ENCODE measurements at regions of chr3 and their contacts with region 1.

Region 1: DNA sequence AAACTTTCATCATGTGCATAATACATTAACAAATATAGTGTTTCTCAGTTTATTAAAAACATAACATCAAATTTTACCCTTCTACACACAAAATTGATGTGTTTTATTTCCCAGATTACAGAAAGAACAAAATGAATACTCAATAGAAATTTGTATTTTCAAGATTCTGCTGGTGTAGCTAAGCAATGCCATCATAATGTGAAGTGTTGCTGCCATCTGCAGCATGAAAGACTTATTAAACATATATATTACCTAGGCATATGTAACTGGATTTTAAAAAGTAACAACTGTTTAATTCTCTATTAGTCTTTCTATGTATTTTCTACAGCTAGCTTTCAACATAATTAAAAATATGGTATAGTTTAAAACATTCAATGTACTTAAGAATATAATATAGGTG is 27.5 kb downstream of the PLSCR5 start:
- DNase-seq: no peak
- ATAC-seq: peak; percentile 70
- H3K4me3 ChIP-seq: no peak overlapping the region
- H3K27ac ChIP-seq: no peak overlapping the region
- H3K4me1 ChIP-seq: no peaks in the 10 kb centered on the region
- H3K27me3 ChIP-seq: no peaks in the 10 kb centered on the region
- CTCF ChIP-seq: peak; percentile 9 to 59 (median 19); a peak in 3 of 6 replicates
- EP300 ChIP-seq: no peak
- POLR2A ChIP-seq: no peak
- RAD21 ChIP-seq: peak; percentile 78

Region 2: GRCh38 chr3:146218880-146219866 is 358.5 kb before region 1 on chr3:
- CTCF ChIA-PET with region 1: interaction called, 15 read pairs
- POLR2A ChIA-PET with region 1: no interaction called
- RAD21 ChIA-PET with region 1: interaction called, 5 read pairs
- SMC1A ChIA-PET with region 1: interaction called, 11 read pairs
- in situ Hi-C with region 1: loop called (anchors 5 kb)
- intact Hi-C with region 1: loop called (anchors 1 kb)
- DNase-seq: no peak
- ATAC-seq: peak; percentile 44; the same call in 1 of the 3 replicates
- H3K4me3 ChIP-seq: no peak overlapping the region
- H3K27ac ChIP-seq: no peak overlapping the region
- H3K4me1 ChIP-seq: no peaks in the 10 kb centered on the region
- H3K27me3 ChIP-seq: no peaks in the 10 kb centered on the region
- CTCF ChIP-seq: peak; percentile 47 to 51 (median 50); a peak in 5 of 6 replicates
- EP300 ChIP-seq: no peak
- POLR2A ChIP-seq: no peak
- RAD21 ChIP-seq: peak; percentile 53

Region 3: DNA sequence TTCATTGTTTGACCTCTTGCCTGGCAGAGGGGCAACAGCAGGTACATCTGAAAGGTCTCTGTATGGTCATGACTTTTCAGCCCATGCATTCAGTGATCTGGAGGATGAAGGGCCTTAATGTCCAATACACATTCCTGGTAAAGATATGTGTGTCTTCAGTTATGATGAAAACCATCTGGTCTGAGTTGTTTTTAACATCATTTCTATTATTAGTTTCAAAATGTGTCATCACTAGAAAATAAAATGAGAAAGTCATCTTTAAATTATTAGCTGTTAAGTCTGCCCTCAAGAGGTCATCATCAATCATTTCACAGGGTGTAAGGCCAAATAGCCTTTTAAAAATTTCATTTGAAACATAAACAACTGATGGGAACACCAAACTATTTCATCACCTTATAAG is 234.7 kb before region 1 on chr3:
- CTCF ChIA-PET with region 1: no interaction called
- POLR2A ChIA-PET with region 1: no interaction called
- RAD21 ChIA-PET with region 1: no interaction called
- SMC1A ChIA-PET with region 1: no interaction called
- in situ Hi-C with region 1: no loop called
- intact Hi-C with region 1: no loop called
- DNase-seq: no peak
- ATAC-seq: no peak
- H3K4me3 ChIP-seq: no peak overlapping the region
- H3K27ac ChIP-seq: no peak overlapping the region
- H3K4me1 ChIP-seq: no peaks in the 10 kb centered on the region
- H3K27me3 ChIP-seq: no peaks in the 10 kb centered on the region
- CTCF ChIP-seq: no peak
- EP300 ChIP-seq: no peak
- POLR2A ChIP-seq: no peak
- RAD21 ChIP-seq: no peak

Region 4: DNA sequence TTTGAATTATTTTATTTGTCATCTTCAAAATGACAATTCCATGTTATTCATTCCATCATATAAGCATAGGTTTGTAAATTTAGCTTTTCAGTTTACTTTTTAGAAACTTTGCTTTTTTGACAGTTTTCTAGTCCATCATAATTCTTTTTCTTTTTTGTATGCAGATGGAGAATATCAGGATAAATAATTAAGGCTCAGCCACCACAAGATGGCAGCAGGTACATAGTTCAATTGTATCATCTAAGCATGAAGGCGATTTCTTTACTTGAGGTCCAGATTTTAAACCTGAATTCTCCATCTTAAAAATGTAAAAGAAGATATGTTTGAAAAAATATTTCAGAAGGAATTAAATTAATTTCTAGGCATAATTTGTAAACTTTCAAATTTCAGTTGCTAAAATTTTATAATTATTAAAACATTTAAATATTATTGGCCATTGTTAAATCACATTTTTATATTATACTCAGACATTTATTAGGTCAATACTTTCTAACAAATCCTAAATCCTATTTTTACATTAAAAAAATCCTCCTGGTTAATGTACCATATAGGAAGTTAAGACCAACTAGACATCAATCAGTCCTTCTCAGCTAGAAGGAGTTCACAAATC is 12.3 kb after region 1 on chr3:
- CTCF ChIA-PET with region 1: interaction called, 13 read pairs
- POLR2A ChIA-PET with region 1: no interaction called
- RAD21 ChIA-PET with region 1: no interaction called
- SMC1A ChIA-PET with region 1: interaction called, 3 read pairs
- in situ Hi-C with region 1: no loop called
- intact Hi-C with region 1: no loop called
- DNase-seq: no peak
- ATAC-seq: peak; percentile 65
- H3K4me3 ChIP-seq: no peak overlapping the region
- H3K27ac ChIP-seq: no peak overlapping the region
- H3K4me1 ChIP-seq: no peaks in the 10 kb centered on the region
- H3K27me3 ChIP-seq: no peaks in the 10 kb centered on the region
- CTCF ChIP-seq: peak; percentile 30 to 51 (median 38); a peak in 5 of 6 replicates
- EP300 ChIP-seq: no peak
- POLR2A ChIP-seq: no peak
- RAD21 ChIP-seq: peak; percentile 48; the same call in 1 of the 2 replicates

Region 5: GRCh38 chr3:146705205-146705604 is 127.5 kb after region 1 on chr3:
- CTCF ChIA-PET with region 1: no interaction called
- POLR2A ChIA-PET with region 1: no interaction called
- RAD21 ChIA-PET with region 1: no interaction called
- SMC1A ChIA-PET with region 1: no interaction called
- in situ Hi-C with region 1: no loop called
- intact Hi-C with region 1: no loop called
- DNase-seq: no peak
- ATAC-seq: peak; percentile 68
- H3K4me3 ChIP-seq: no peak overlapping the region
- H3K27ac ChIP-seq: no peak overlapping the region
- H3K4me1 ChIP-seq: no peaks in the 10 kb centered on the region
- H3K27me3 ChIP-seq: no peaks in the 10 kb centered on the region
- CTCF ChIP-seq: no peak
- EP300 ChIP-seq: no peak
- POLR2A ChIP-seq: no peak
- RAD21 ChIP-seq: no peak